ENCODE measurements at regions of chr18 and their contacts with region 1.

Region 1: DNA sequence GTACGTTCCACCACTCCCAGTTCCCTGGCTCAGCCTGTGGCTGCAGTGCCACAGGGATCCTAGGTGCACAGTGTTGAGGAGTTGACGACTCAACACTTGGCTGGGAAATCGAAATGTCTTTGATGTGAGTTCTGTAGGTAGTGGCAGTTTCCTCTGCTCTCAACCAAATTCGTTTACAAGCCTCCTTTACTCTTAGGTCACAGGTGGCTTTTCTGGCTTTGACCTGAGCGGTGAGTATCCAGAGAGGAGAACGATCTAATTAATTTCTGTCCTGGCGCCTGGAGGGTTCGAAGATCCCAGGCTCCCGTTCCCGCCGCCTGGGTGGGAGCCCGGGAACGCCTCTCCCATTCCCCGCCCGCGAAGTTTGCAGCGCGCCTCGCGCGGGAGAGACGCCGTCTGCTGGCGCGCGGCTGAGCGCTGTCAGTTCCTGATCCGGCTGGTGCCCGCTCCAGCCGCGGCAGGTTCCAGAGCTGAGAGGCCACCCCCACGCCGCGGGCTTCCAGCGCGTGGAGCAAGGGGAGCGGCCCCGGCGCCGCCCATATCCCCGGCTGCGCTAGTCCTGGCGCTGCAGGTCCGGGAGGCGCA is at the start of gene LAMA3:
- DNase-seq: peak; percentile 57
- H3K4me3 ChIP-seq: peak within 1 kb of the TSS; percentile 52 to 63 (median 62)
- H3K27ac ChIP-seq: no peak within 1 kb of the TSS
- H3K4me1 ChIP-seq: peaks cover 17% of the 10 kb centered on the region
- H3K27me3 ChIP-seq: no peaks in the 10 kb centered on the region
- CTCF ChIP-seq: peak in 1 of 2 donors; percentile 50
- total RNA-seq, gene LAMA3: 1,329 to 2,471 TPM

Region 2: DNA sequence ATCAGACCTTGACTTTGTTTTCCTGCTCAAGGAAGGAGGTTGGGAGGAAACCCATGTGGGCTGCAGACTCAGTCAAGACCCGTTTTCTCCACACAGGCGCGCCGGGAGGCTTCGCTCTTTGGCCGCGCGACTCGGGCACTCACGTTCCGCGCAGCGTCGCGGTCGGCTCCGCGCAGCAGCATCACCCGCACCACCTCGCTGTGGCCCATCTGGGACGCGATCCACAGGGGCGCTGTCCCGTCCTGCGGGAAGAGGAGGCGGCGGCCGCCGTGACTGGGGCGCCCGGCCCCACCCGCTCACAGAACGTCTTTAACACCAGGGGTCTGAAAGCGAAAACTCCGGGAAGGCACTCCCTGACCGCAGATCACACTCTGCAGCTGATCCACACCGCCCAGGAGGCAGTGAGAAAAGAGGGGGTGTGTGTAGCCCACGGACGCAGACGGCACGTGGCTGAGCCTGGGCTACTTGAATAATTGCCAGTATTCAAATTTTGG is 69.7 kb before region 1 on chr18:
- CTCF ChIA-PET with region 1: no interaction called
- dilution Hi-C with region 1: no loop called
- in situ Hi-C with region 1: loop called in 1 of 2 experiments (anchors 10 kb)
- intact Hi-C with region 1: loop called (anchors 2 kb)
- DNase-seq: no peak
- H3K4me3 ChIP-seq: peak overlapping the region in 2 of 3 experiments; percentile 33 to 34
- H3K27ac ChIP-seq: no peak overlapping the region
- H3K4me1 ChIP-seq: peaks cover 8% of the 10 kb centered on the region
- H3K27me3 ChIP-seq: peaks cover 5% of the 10 kb centered on the region
- CTCF ChIP-seq: no peak

Region 3: GRCh38 chr18:23662309-23663263 is 26.5 kb before region 1 on chr18 and contains the start of gene ANKRD29:
- CTCF ChIA-PET with region 1: interaction called, 5 read pairs
- dilution Hi-C with region 1: no loop called
- in situ Hi-C with region 1: no loop called
- intact Hi-C with region 1: loop called (anchors 1 kb)
- DNase-seq: peak; percentile 21
- H3K4me3 ChIP-seq: peak within 1 kb of the TSS; percentile 45 to 62 (median 55)
- H3K27ac ChIP-seq: no peak within 1 kb of the TSS
- H3K4me1 ChIP-seq: peaks cover 14% of the 10 kb centered on the region
- H3K27me3 ChIP-seq: no peaks in the 10 kb centered on the region
- CTCF ChIP-seq: no peak
- total RNA-seq, gene ANKRD29: 7.5 to 8.7 TPM

Region 4: GRCh38 chr18:23798249-23798648 is 109.1 kb after region 1 on chr18:
- CTCF ChIA-PET with region 1: no interaction called
- dilution Hi-C with region 1: no loop called
- in situ Hi-C with region 1: no loop called
- intact Hi-C with region 1: no loop called
- DNase-seq: no peak
- H3K4me3 ChIP-seq: no peak overlapping the region
- H3K27ac ChIP-seq: no peak overlapping the region
- H3K4me1 ChIP-seq: no peaks in the 10 kb centered on the region
- H3K27me3 ChIP-seq: no peaks in the 10 kb centered on the region
- CTCF ChIP-seq: no peak

Region 5: GRCh38 chr18:23943903-23944624 is 254.9 kb after region 1 on chr18:
- CTCF ChIA-PET with region 1: no interaction called
- dilution Hi-C with region 1: no loop called
- in situ Hi-C with region 1: no loop called
- intact Hi-C with region 1: no loop called
- DNase-seq: no peak
- H3K4me3 ChIP-seq: no peak overlapping the region
- H3K27ac ChIP-seq: no peak overlapping the region
- H3K4me1 ChIP-seq: no peaks in the 10 kb centered on the region
- H3K27me3 ChIP-seq: no peaks in the 10 kb centered on the region
- CTCF ChIP-seq: no peak